Activated CD4-positive, alpha-beta memory T cell treated with anti-CD3 and anti-CD28 coated beads for 36 hours (primary cell): ENCODE measurements at regions of chr6 and their contacts with region 1.

Region 1: GRCh38 chr6:90413867-90414266 is 117.2 kb upstream of the BACH2 start:
- DNase-seq: peak; percentile 92
- H3K4me3 Mint-ChIP-seq: peak overlapping the region; percentile 64
- H3K27ac Mint-ChIP-seq: peak overlapping the region; percentile 93
- H3K4me1 Mint-ChIP-seq: peaks cover 71% of the 10 kb centered on the region
- H3K27me3 Mint-ChIP-seq: no peaks in the 10 kb centered on the region

Region 2: GRCh38 chr6:89952686-89953085 is 461.2 kb before region 1 on chr6:
- CTCF ChIA-PET with region 1: no interaction called
- POLR2A ChIA-PET with region 1: no interaction called
- intact Hi-C with region 1: loop called (anchors 1 kb)
- DNase-seq: peak; percentile 72
- H3K4me3 Mint-ChIP-seq: peak overlapping the region; percentile 8
- H3K27ac Mint-ChIP-seq: peak overlapping the region; percentile 69
- H3K4me1 Mint-ChIP-seq: peaks cover 68% of the 10 kb centered on the region
- H3K27me3 Mint-ChIP-seq: no peaks in the 10 kb centered on the region

Region 3: GRCh38 chr6:90338422-90338821 is 75.4 kb before region 1 on chr6:
- CTCF ChIA-PET with region 1: no interaction called
- POLR2A ChIA-PET with region 1: no interaction called
- intact Hi-C with region 1: no loop called
- DNase-seq: no peak
- H3K4me3 Mint-ChIP-seq: no peak overlapping the region
- H3K27ac Mint-ChIP-seq: no peak overlapping the region
- H3K4me1 Mint-ChIP-seq: no peaks in the 10 kb centered on the region
- H3K27me3 Mint-ChIP-seq: no peaks in the 10 kb centered on the region

Region 4: GRCh38 chr6:90403489-90404381 is 10.1 kb before region 1 on chr6:
- CTCF ChIA-PET with region 1: interaction called, 13 read pairs
- POLR2A ChIA-PET with region 1: interaction called, 127 read pairs
- intact Hi-C with region 1: loop called (anchors 1 kb)
- DNase-seq: no peak
- H3K4me3 Mint-ChIP-seq: peak overlapping the region; percentile 64
- H3K27ac Mint-ChIP-seq: peak overlapping the region; percentile 93
- H3K4me1 Mint-ChIP-seq: peaks cover 81% of the 10 kb centered on the region
- H3K27me3 Mint-ChIP-seq: no peaks in the 10 kb centered on the region

Region 5: DNA sequence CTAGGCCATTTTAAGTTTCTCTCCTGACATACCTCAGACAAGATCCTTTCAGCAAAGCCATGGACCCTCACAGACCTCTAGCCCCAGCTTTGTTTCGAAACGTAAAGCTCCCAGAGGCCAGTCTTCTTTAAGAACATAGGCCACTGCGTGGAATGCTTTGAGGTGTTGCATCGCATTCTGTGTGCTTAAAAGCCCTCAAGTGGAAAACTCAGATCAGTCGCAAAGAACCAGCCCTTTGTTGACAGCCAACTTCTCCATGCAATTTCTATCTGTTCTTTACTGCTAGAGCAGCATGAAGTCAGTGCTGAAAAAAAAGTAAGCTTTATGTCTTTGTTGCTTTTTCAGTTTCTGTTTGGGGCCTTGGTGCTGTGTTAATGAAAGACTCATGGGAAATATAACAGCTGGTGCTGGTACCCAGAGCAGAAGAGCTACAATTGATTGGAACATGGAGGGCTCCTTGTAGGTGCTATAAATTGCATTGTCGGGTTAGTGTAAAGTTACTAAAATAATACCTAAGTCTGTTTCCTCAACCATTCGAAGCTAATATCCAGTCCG is 30.4 kb after region 1 on chr6:
- CTCF ChIA-PET with region 1: no interaction called
- POLR2A ChIA-PET with region 1: interaction called, 3 read pairs
- intact Hi-C with region 1: loop called (anchors 1 kb)
- DNase-seq: no peak
- H3K4me3 Mint-ChIP-seq: peak overlapping the region; percentile 48
- H3K27ac Mint-ChIP-seq: peak overlapping the region; percentile 92
- H3K4me1 Mint-ChIP-seq: peaks cover 47% of the 10 kb centered on the region
- H3K27me3 Mint-ChIP-seq: no peaks in the 10 kb centered on the region

Region 6: GRCh38 chr6:90458353-90459224 is 44.7 kb after region 1 on chr6:
- CTCF ChIA-PET with region 1: interaction called, 3 read pairs
- POLR2A ChIA-PET with region 1: interaction called, 38 read pairs
- intact Hi-C with region 1: loop called (anchors 1 kb)
- DNase-seq: peak; percentile 94
- H3K4me3 Mint-ChIP-seq: peak overlapping the region; percentile 40
- H3K27ac Mint-ChIP-seq: peak overlapping the region; percentile 95
- H3K4me1 Mint-ChIP-seq: peaks cover 87% of the 10 kb centered on the region
- H3K27me3 Mint-ChIP-seq: no peaks in the 10 kb centered on the region

Region 7: DNA sequence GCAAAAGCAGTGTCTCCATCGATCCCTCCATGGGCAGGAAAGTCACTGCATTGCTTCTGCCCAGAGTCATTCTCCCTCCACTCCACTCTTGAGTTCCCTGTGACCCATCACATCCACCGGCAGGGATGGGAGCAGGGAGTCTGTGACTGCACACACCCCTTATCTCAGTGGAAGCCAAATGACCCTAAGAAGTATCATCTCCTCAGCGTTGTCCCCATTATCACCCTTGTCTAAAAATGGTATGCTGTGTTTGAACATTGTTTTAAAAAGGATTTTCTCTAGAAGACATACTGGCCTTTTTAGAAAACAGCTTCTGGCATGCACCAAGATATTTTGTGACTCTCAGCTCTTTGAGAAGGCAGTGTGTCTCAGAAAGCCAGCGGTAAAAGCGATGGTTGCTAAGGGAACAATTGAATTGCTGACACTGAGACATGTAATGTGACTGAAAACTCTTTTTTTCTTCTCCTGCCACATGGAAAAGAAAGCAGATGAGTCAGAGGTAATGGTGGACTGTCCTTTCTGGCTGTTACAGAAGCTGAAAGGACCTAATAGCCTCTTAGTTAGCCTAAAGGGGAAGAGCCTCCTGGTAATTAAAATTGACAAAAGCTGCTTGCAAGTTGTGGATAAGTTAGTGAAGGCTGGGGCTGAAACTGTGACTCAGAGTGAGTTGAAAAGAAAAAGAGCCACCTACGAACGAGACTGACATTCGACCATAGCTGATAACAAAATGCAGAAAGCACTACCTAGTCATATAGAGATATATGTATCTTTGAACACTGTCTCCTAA is 52.5 kb after region 1 on chr6:
- CTCF ChIA-PET with region 1: interaction called, 3 read pairs
- POLR2A ChIA-PET with region 1: interaction called, 13 read pairs
- intact Hi-C with region 1: loop called (anchors 2 kb)
- DNase-seq: peak; percentile 60
- H3K4me3 Mint-ChIP-seq: peak overlapping the region; percentile 27
- H3K27ac Mint-ChIP-seq: peak overlapping the region; percentile 96
- H3K4me1 Mint-ChIP-seq: peaks cover 84% of the 10 kb centered on the region
- H3K27me3 Mint-ChIP-seq: peaks cover 1% of the 10 kb centered on the region

Region 8: DNA sequence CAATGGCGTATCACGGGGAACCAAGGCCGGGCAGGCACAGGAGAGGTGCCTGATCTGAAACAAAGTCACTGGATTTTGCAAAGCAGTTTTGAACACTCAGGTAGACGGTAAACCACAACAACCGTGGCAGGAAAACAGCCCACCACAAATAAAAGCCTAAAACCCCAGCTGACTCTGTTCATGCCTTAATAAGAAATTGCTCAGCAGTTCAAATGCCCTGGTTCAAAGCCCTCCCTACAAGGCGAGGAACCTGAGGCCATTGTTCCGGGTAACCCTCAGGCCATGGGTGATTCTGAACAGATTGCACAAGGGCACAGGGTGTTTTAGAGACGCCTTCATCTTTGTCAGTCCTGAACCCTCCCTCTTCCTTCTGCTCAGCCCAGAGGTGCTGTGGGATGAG is 58.9 kb after region 1 on chr6:
- CTCF ChIA-PET with region 1: interaction called, 5 read pairs
- POLR2A ChIA-PET with region 1: interaction called, 7 read pairs
- intact Hi-C with region 1: loop called (anchors 1 kb)
- DNase-seq: peak; percentile 69
- H3K4me3 Mint-ChIP-seq: peak overlapping the region; percentile 54
- H3K27ac Mint-ChIP-seq: peak overlapping the region; percentile 83
- H3K4me1 Mint-ChIP-seq: peaks cover 88% of the 10 kb centered on the region
- H3K27me3 Mint-ChIP-seq: peaks cover 1% of the 10 kb centered on the region

Region 9: DNA sequence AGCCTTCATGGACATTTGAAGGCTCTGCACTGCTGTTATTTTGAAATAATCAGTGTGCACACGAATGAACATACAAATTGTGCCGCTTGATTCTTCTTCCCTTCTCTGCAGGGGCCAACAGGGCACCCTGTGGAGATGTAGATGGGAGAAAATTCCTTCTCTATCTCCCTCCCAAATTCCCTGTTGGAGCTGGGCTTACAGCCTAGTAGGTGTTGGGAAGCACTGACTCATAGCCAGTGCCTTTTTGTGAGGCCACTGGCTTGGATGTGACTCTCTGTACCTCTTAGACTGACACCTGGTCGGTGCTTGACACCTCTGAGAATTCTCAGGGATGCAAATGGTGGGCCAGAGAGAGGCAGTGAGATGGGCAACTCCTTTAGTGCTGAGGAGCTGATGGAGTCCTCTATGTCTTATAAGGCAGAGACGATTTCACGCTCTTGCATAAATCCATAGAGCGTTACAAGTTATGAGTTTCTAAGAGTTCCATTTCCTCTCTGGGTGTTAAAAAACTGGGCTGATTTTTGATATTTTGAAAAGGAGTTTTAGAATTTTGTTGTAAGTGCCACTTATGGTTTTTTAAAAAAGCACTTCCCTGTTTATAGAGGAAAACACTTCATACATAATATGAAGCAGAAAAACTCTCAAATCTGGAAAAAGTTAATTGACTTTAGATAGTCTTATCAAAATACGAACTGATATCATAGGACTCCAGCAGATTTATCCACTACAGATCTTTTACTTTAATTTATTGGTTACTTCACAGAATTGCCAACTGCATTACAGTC is 262.8 kb after region 1 on chr6:
- CTCF ChIA-PET with region 1: no interaction called
- POLR2A ChIA-PET with region 1: no interaction called
- intact Hi-C with region 1: no loop called
- DNase-seq: no peak
- H3K4me3 Mint-ChIP-seq: no peak overlapping the region
- H3K27ac Mint-ChIP-seq: no peak overlapping the region
- H3K4me1 Mint-ChIP-seq: no peaks in the 10 kb centered on the region
- H3K27me3 Mint-ChIP-seq: peaks cover 13% of the 10 kb centered on the region